Left ventricle myocardium superior (tissue), 1 donor: ENCODE measurements at regions of chr14 and their contacts with region 1.

Region 1: DNA sequence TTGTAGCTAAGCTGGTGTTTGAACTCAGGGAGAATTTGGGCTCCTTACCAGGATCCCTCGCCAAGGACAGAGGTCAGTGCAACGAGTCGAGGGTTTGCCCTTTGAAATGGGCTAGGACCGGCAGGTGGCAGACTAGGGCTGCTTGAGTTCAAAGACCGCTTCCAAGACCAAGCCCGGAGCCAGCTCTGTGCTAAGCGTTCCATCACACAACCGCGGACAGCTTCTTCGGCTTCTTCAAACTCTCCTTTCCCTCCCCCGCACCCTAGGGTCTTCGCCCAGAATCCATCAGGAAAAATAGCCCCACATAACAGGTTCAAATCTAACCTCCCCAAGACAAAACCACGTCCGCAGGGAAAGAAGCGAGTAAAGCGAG is 705 bp upstream of the FLVCR2 start:
- DNase-seq: peak; percentile 92
- ATAC-seq: peak; percentile 85

Region 2: DNA sequence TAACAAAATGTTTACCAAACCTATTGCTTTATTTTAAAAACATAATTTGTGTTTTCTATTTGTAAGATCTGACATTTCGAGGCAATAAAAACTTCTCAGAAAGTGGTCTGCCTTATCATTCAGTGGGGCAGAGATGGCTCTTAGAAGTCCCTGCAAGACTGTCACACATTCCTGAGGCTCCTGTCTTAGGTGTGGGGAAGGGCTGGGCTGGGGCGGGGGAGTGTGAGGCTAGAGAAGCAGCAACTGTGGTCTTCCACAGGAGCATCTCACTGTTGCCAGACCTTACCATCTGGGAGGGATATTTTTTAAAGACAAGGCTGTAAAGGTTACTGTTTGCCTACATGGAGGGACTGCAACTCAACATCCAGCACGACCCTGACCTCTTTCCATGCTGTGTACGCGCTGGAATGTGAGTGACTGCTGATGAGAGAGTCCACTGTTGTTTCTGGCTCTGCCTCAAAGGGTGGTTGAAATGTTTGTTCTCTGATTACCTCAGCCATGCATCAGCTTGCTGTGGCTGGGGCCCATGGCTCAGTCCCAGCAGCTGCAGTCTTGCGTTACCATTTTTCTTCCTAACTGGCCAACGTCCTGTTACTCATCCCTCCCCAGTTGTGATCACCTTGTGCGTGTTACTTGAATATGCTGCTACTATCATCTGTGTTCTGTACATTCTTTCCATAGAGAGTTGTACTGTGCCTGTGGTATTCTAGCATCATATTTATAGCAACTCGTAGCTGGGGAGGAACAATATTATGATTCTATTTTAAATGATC is 70.5 kb after region 1 on chr14:
- intact Hi-C with region 1: loop called (anchors 2 kb)
- DNase-seq: peak; percentile 64
- ATAC-seq: peak; percentile 92